Right ventricle myocardium inferior (tissue), 1 donor: ENCODE measurements at regions of chr17 and their contacts with region 1.

Region 1: GRCh38 chr17:1783834-1784611 is 22.2 kb downstream of the SERPINF1 start:
- DNase-seq: peak; percentile 89
- ATAC-seq: peak; percentile 81

Region 2: GRCh38 chr17:1031711-1032110 is 752.3 kb before region 1 on chr17:
- intact Hi-C with region 1: no loop called
- DNase-seq: peak; percentile 87
- ATAC-seq: peak; percentile 76

Region 3: GRCh38 chr17:1573916-1574696 is 209.9 kb before region 1 on chr17:
- intact Hi-C with region 1: loop called (anchors 2 kb)
- DNase-seq: peak; percentile 96
- ATAC-seq: peak; percentile 63

Region 4: GRCh38 chr17:1673041-1673785 is 110.8 kb before region 1 on chr17:
- intact Hi-C with region 1: loop called (anchors 5 kb)
- DNase-seq: no peak
- ATAC-seq: no peak

Region 5: GRCh38 chr17:1716076-1716995 is 67.7 kb before region 1 on chr17:
- intact Hi-C with region 1: loop called (anchors 2 kb)
- DNase-seq: peak; percentile 100
- ATAC-seq: peak; percentile 80

Region 6: GRCh38 chr17:1724506-1725362 is 59.3 kb before region 1 on chr17 and contains the start of gene WDR81:
- intact Hi-C with region 1: loop called (anchors 2 kb)
- DNase-seq: peak; percentile 97
- ATAC-seq: peak; percentile 82
- total RNA-seq, gene WDR81: 10.4 TPM